ENCODE measurements at regions of chr15 and their contacts with region 1.

Region 1: GRCh38 chr15:74438721-74439316 is 5.1 kb upstream of the SEMA7A start:
- DNase-seq: peak; percentile 55 to 87 (median 76)
- ATAC-seq: peak; percentile 81
- H3K4me3 ChIP-seq: no peak overlapping the region
- H3K4me3 Mint-ChIP-seq: no peak overlapping the region
- H3K27ac ChIP-seq: no peak overlapping the region
- H3K27ac Mint-ChIP-seq: no peak overlapping the region
- H3K4me1 ChIP-seq: peaks cover 9% of the 10 kb centered on the region
- H3K4me1 Mint-ChIP-seq: peaks cover 19% of the 10 kb centered on the region
- H3K27me3 ChIP-seq: no peaks in the 10 kb centered on the region
- H3K27me3 Mint-ChIP-seq: no peaks in the 10 kb centered on the region
- CTCF ChIP-seq: peak; percentile 87

Region 2: GRCh38 chr15:74302821-74303359 is 135.9 kb before region 1 on chr15:
- CTCF ChIA-PET with region 1: no interaction called
- POLR2A ChIA-PET with region 1: no interaction called
- intact Hi-C with region 1: no loop called
- DNase-seq: peak in 6 of 9 experiments; percentile 26 to 44 (median 34)
- ATAC-seq: no peak
- H3K4me3 ChIP-seq: no peak overlapping the region
- H3K4me3 Mint-ChIP-seq: no peak overlapping the region
- H3K27ac ChIP-seq: no peak overlapping the region
- H3K27ac Mint-ChIP-seq: no peak overlapping the region
- H3K4me1 ChIP-seq: no peaks in the 10 kb centered on the region
- H3K4me1 Mint-ChIP-seq: no peaks in the 10 kb centered on the region
- H3K27me3 ChIP-seq: no peaks in the 10 kb centered on the region
- H3K27me3 Mint-ChIP-seq: peaks cover 59% of the 10 kb centered on the region
- CTCF ChIP-seq: peak; percentile 42

Region 3: GRCh38 chr15:74382004-74382816 is 56.6 kb before region 1 on chr15:
- CTCF ChIA-PET with region 1: interaction called, 717 read pairs
- POLR2A ChIA-PET with region 1: interaction called, 11 read pairs
- intact Hi-C with region 1: loop called (anchors 1 kb)
- DNase-seq: peak; percentile 49 to 88 (median 81)
- ATAC-seq: peak; percentile 27
- H3K4me3 ChIP-seq: no peak overlapping the region
- H3K4me3 Mint-ChIP-seq: no peak overlapping the region
- H3K27ac ChIP-seq: no peak overlapping the region
- H3K27ac Mint-ChIP-seq: no peak overlapping the region
- H3K4me1 ChIP-seq: peaks cover 36% of the 10 kb centered on the region
- H3K4me1 Mint-ChIP-seq: peaks cover 32% of the 10 kb centered on the region
- H3K27me3 ChIP-seq: no peaks in the 10 kb centered on the region
- H3K27me3 Mint-ChIP-seq: no peaks in the 10 kb centered on the region
- CTCF ChIP-seq: peak; percentile 97

Region 4: GRCh38 chr15:74402873-74403587 is 35.8 kb before region 1 on chr15:
- CTCF ChIA-PET with region 1: interaction called, 13 read pairs
- POLR2A ChIA-PET with region 1: interaction called, 8 read pairs
- intact Hi-C with region 1: loop called in 1 of 2 experiments (anchors 5 kb)
- DNase-seq: peak in 8 of 9 experiments; percentile 42 to 75 (median 62)
- ATAC-seq: peak; percentile 46
- H3K4me3 ChIP-seq: no peak overlapping the region
- H3K4me3 Mint-ChIP-seq: peak overlapping the region; percentile 45
- H3K27ac ChIP-seq: peak overlapping the region in 1 of 2 experiments; percentile 73
- H3K27ac Mint-ChIP-seq: peak overlapping the region; percentile 62
- H3K4me1 ChIP-seq: peaks cover 60% of the 10 kb centered on the region
- H3K4me1 Mint-ChIP-seq: peaks cover 64% of the 10 kb centered on the region
- H3K27me3 ChIP-seq: no peaks in the 10 kb centered on the region
- H3K27me3 Mint-ChIP-seq: no peaks in the 10 kb centered on the region
- CTCF ChIP-seq: no peak

Region 5: GRCh38 chr15:74428442-74428787 is 10.4 kb before region 1 on chr15:
- CTCF ChIA-PET with region 1: interaction called, 17 read pairs
- POLR2A ChIA-PET with region 1: no interaction called
- intact Hi-C with region 1: no loop called
- DNase-seq: no peak
- ATAC-seq: no peak
- H3K4me3 ChIP-seq: no peak overlapping the region
- H3K4me3 Mint-ChIP-seq: no peak overlapping the region
- H3K27ac ChIP-seq: no peak overlapping the region
- H3K27ac Mint-ChIP-seq: peak overlapping the region; percentile 10
- H3K4me1 ChIP-seq: peaks cover 7% of the 10 kb centered on the region
- H3K4me1 Mint-ChIP-seq: peaks cover 35% of the 10 kb centered on the region
- H3K27me3 ChIP-seq: no peaks in the 10 kb centered on the region
- H3K27me3 Mint-ChIP-seq: no peaks in the 10 kb centered on the region
- CTCF ChIP-seq: no peak

Region 6: DNA sequence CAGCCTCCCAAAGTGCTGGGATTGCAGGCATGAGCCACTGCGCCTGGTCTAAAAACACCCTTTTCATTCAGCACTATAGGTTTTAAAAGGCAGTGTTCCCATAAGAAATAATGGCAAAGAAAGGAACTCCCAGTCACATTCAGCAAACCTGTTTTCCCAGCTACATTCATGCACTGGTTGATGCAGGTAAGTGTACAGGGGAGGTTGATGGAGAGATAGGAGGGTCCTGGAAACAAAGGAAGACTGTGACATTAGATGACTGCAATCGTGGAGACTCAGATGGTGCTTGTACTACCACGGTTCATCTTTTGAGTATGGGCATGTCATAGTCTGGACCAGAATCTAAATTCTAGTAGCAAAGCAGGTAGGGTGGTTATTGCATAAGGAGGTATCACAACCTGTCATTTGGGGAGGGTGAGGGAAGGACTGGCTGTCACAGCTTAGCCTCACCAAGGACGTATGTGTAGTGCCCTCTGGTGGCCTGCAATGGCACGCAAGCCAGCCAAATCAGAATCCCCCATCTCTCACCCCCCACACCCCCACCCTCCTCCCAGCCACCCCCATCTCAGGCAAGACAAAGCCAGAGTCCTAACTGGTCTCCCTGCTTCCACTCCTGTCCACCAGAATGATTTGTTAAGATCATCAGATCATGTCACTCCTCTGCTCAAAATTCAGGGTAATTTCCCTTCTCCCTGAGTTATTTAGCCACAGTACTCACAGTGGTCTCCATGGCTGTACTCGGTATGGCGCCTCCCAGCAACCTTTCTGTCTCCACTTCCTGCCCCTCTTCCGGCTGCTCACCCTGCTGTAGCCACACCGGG is 50.9 kb after region 1 on chr15:
- CTCF ChIA-PET with region 1: interaction called, 5 read pairs
- POLR2A ChIA-PET with region 1: no interaction called
- intact Hi-C with region 1: loop called (anchors 1 to 2 kb)
- DNase-seq: peak; percentile 58 to 90 (median 79)
- ATAC-seq: peak; percentile 93
- H3K4me3 ChIP-seq: peak overlapping the region; percentile 14 to 18
- H3K4me3 Mint-ChIP-seq: peak overlapping the region; percentile 65
- H3K27ac ChIP-seq: peak overlapping the region in 1 of 2 experiments; percentile 55
- H3K27ac Mint-ChIP-seq: peak overlapping the region; percentile 83
- H3K4me1 ChIP-seq: peaks cover 19% of the 10 kb centered on the region
- H3K4me1 Mint-ChIP-seq: peaks cover 22% of the 10 kb centered on the region
- H3K27me3 ChIP-seq: no peaks in the 10 kb centered on the region
- H3K27me3 Mint-ChIP-seq: no peaks in the 10 kb centered on the region
- CTCF ChIP-seq: peak; percentile 59

Measured in CD8-positive, alpha-beta T cell (primary cell).